Heart right ventricle (tissue), 16 donors: ENCODE measurements at regions of chr15 and their contacts with region 1.

Region 1: DNA sequence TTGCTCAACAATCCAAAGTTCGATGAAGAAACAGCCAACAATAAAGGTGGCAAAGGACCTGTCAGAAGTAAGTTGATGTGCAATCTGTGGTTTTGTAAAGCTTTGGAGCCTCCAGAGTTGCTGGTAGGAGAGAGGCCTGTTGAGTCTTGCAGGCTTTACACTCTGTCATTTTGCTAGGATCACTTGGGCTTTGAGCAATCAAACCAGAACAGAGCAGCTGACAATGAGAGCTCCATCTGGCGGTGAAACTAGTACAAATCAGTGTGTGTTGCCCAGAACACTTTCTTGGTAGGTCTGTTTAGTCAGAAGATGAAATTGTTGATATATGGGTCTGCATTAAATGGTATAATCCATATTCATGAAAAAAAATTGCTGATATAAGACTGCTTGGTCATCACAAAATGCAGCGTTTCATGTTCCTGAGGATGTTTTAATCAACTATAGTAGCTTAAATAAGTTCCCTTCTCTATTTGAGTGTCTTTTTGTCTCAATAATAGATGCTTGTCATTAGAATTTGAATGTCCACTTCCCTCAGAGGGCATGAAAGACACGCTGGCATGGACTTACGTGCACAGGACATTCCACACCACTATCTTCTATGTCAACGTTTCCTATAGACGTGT is 25.7 kb downstream of the TMOD2 start:
- DNase-seq: peak in 1 of 2 donors; percentile 80
- ATAC-seq: peak; percentile 81 to 95 (median 90)
- H3K4me3 ChIP-seq: no peak overlapping the region
- H3K27ac ChIP-seq: no peak overlapping the region
- H3K4me1 ChIP-seq: peaks cover 0 to 11% (median 0%) of the 10 kb centered on the region in 9 donors
- H3K27me3 ChIP-seq: no peaks in the 10 kb centered on the region
- CTCF ChIP-seq: peak; percentile 49 to 88 (median 80)

Region 2: DNA sequence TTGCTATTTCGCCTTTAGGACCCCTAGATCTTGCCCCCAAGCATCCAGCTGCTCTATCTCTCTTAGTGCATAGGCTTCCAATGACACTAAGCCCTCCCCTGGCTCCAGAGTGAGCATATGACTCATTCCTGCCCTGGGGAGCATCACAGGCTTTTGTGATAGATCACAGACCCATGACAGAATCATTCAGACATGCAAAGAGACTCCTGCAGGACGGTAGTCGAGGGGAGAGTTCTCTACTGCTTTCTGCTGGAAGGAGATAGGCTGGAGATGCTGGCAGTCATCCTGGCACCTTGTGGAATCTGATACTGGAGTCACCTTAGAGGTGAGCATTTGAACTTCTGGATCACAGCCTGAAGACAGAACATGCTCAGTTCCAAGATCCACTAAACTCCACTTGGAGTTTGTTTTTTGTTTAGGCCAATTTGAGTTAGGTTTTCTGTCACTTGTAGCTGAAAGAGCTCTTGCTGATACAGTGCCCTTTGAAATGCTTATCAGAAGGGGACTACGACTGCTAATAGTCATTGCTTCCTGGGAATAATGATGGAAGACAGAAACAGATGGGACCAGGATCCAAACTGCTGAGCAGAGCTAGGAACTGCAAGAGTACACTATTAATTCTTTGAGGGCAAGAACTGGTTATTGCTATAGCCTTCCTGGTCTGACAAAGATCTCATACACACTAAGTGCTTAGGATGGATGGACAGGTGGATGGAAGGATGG is 50.6 kb before region 1 on chr15:
- intact Hi-C with region 1: loop called in 1 of 10 experiments (anchors 10 kb)
- DNase-seq: peak; percentile 17 to 71
- ATAC-seq: peak; percentile 91 to 99 (median 96)
- H3K4me3 ChIP-seq: no peak overlapping the region
- H3K27ac ChIP-seq: peak overlapping the region in 5 of 10 donors; percentile 18 to 47 (median 37)
- H3K4me1 ChIP-seq: peaks cover 0 to 59% (median 46%) of the 10 kb centered on the region in 9 donors
- H3K27me3 ChIP-seq: no peaks in the 10 kb centered on the region
- CTCF ChIP-seq: no peak

Region 3: GRCh38 chr15:51853998-51854397 is 76.9 kb after region 1 on chr15:
- intact Hi-C with region 1: no loop called
- DNase-seq: no peak
- ATAC-seq: no peak
- H3K4me3 ChIP-seq: no peak overlapping the region
- H3K27ac ChIP-seq: no peak overlapping the region
- H3K4me1 ChIP-seq: peaks cover 0 to 76% (median 23%) of the 10 kb centered on the region in 9 donors
- H3K27me3 ChIP-seq: no peaks in the 10 kb centered on the region
- CTCF ChIP-seq: no peak